Psoas muscle (tissue), 8 donors: ENCODE measurements at regions of chr1 and their contacts with region 1.

Region 1: GRCh38 chr1:109773146-109773899 is 9.6 kb upstream of the EPS8L3 start:
- DNase-seq: peak; percentile 80 to 90
- ATAC-seq: peak; percentile 88 to 92 (median 90)
- H3K4me3 ChIP-seq: no peak overlapping the region
- H3K27ac ChIP-seq: no peak overlapping the region
- H3K4me1 ChIP-seq: no peaks in the 10 kb centered on the region
- H3K27me3 ChIP-seq: no peaks in the 10 kb centered on the region
- CTCF ChIP-seq: peak; percentile 87

Region 2: GRCh38 chr1:109548321-109549267 is 224.7 kb before region 1 on chr1 and contains the start of gene GNAI3:
- intact Hi-C with region 1: loop called in 1 of 2 experiments (anchors 2 kb)
- DNase-seq: peak; percentile 96 to 98
- ATAC-seq: peak; percentile 97 to 98 (median 98)
- H3K4me3 ChIP-seq: peak within 1 kb of the TSS; percentile 90
- H3K27ac ChIP-seq: peak within 1 kb of the TSS; percentile 95
- H3K4me1 ChIP-seq: peaks cover 30% of the 10 kb centered on the region
- H3K27me3 ChIP-seq: no peaks in the 10 kb centered on the region
- CTCF ChIP-seq: no peak
- total RNA-seq, gene GNAI3: 1.4 to 2.3 (median 1.7) TPM

Region 3: DNA sequence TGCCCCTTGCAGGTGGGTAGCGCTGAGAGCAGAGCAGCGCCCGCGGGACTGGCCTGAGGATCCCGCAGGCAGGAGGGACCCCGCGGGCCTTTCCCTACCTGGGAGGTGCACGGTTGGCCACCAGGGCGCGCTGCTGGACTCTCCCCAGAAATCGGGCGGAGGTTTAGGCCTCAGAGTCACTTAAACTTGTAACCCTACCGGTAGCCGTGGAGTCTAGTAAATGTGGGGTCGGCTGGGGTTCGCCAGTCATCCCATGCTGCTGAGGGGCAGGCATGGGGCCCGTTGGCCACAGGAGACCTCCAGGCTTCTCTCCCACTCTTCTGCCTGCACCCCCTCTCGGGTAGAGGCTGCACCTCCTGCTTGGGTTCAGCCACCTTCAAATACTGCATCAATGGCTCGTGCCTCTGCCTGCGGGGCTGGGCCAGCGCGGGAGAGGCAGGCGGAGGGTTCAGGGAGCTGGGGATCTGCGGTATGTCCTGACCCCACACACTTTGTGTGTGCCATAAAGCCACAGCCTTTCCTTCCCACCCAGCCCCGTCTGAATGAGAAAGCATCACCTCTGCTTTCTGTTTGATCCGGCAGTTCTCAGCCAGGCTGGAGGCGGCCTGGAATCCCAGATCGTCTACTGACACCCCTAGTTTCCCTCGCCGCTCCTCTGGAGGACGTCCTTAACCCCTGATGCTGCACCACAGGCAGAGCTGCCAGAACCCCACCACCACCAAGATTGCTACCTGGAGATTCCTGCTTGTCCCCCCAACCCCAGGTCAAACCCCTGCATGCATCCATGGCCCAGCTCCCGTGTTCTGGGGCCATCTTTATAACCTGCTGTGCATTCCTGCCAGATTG is 129.7 kb before region 1 on chr1:
- intact Hi-C with region 1: loop called (anchors 1 to 2 kb)
- DNase-seq: peak; percentile 85 to 93
- ATAC-seq: peak; percentile 93 to 97 (median 94)
- H3K4me3 ChIP-seq: peak overlapping the region; percentile 26
- H3K27ac ChIP-seq: no peak overlapping the region
- H3K4me1 ChIP-seq: no peaks in the 10 kb centered on the region
- H3K27me3 ChIP-seq: no peaks in the 10 kb centered on the region
- CTCF ChIP-seq: peak; percentile 93

Region 4: GRCh38 chr1:109722908-109723691 is 50.2 kb before region 1 on chr1:
- intact Hi-C with region 1: loop called in 1 of 2 experiments (anchors 5 kb)
- DNase-seq: no peak
- ATAC-seq: no peak
- H3K4me3 ChIP-seq: no peak overlapping the region
- H3K27ac ChIP-seq: no peak overlapping the region
- H3K4me1 ChIP-seq: no peaks in the 10 kb centered on the region
- H3K27me3 ChIP-seq: no peaks in the 10 kb centered on the region
- CTCF ChIP-seq: no peak

Region 5: GRCh38 chr1:109910123-109910962 is 137.0 kb after region 1 on chr1 and contains the start of gene CSF1:
- intact Hi-C with region 1: loop called in 1 of 2 experiments (anchors 5 kb)
- DNase-seq: peak; percentile 84 to 89
- ATAC-seq: peak; percentile 74 to 89 (median 82)
- H3K4me3 ChIP-seq: peak within 1 kb of the TSS; percentile 89
- H3K27ac ChIP-seq: peak within 1 kb of the TSS; percentile 71
- H3K4me1 ChIP-seq: peaks cover 12% of the 10 kb centered on the region
- H3K27me3 ChIP-seq: no peaks in the 10 kb centered on the region
- CTCF ChIP-seq: no peak
- total RNA-seq, gene CSF1: 7.9 to 14.7 (median 10.6) TPM

Region 6: DNA sequence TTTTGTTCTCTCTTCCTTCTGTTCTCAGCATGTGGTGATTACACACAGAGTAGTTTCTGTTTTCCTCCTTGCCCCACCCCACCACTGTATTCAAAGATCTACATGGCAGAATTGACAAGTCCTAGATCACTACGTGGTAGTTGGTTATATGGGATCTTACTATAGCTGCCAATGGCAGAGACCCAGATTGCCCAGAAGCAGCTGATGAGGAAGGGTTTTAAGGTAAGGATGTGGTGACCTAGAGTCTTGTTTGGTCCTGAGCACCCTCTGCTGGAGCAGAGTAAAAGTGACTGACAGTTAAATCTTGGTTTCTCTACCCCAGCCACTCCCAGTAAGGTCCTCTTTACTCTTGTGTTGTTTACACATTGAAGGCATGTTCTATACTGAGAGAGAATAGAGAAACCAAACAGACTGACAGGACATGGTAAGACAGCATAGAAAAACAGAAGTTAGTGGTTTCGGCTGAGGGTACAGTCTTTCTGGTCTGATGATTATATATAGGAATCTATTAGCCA is 238.3 kb after region 1 on chr1:
- intact Hi-C with region 1: loop called in 1 of 2 experiments (anchors 1 kb)
- DNase-seq: no peak
- ATAC-seq: peak; percentile 74 to 86 (median 82)
- H3K4me3 ChIP-seq: no peak overlapping the region
- H3K27ac ChIP-seq: no peak overlapping the region
- H3K4me1 ChIP-seq: peaks cover 31% of the 10 kb centered on the region
- H3K27me3 ChIP-seq: no peaks in the 10 kb centered on the region
- CTCF ChIP-seq: peak; percentile 60